Dorsolateral prefrontal cortex (tissue), 120 donors: ENCODE measurements at regions of chr4 and their contacts with region 1.

Region 1: DNA sequence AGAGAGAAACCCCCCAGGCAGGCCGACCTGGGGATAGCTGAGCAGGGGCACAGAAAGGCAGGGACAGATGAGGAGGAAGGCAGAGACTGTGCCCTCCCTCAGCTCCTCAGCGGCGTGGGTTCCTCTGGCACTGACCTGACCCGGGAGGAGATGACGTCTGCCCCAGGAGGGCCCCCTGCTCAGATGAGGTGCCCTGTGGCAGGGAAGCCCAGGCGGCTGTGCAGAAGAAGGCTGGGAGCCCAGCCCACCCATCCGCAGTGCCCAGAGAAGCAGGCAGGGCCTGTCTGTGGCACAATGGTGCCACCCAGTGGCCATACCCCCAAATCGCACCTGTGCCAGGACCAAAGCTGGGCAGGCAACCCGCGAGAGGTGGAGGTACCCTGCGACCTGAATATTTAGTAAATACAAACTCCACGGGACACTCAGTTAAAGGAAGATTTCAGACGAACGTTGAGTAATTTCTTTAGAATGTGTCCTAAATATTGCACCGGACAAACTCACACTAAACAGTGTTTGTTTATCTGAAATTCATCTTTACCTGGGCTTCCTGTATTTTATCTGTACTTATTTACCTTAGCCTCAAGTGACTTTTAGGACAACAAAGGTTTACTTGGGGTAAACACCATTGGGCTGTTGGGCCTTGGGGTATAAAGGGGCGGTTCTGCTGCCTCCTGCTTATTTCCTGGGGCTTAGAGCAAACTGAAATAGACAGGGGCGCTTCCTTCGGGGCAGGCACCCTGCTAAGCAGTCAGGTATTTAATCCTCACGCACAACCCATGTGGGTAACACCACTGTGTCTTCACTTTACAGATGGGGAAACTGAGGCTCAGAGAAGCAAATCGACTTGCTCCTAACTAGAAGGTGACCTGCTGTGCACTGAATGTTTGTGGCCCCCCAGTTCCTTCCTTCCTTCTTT is 46.5 kb upstream of the HMX1 start:
- DNase-seq: peak in 9 of 10 donors; percentile 44 to 86 (median 69)
- H3K4me3 ChIP-seq: no peak overlapping the region
- H3K27ac ChIP-seq: no peak overlapping the region
- H3K27me3 ChIP-seq: peaks cover 0 to 33% (median 10%) of the 10 kb centered on the region in 45 donors
- CTCF ChIP-seq: peak; percentile 67 to 96 (median 87)

Region 2: DNA sequence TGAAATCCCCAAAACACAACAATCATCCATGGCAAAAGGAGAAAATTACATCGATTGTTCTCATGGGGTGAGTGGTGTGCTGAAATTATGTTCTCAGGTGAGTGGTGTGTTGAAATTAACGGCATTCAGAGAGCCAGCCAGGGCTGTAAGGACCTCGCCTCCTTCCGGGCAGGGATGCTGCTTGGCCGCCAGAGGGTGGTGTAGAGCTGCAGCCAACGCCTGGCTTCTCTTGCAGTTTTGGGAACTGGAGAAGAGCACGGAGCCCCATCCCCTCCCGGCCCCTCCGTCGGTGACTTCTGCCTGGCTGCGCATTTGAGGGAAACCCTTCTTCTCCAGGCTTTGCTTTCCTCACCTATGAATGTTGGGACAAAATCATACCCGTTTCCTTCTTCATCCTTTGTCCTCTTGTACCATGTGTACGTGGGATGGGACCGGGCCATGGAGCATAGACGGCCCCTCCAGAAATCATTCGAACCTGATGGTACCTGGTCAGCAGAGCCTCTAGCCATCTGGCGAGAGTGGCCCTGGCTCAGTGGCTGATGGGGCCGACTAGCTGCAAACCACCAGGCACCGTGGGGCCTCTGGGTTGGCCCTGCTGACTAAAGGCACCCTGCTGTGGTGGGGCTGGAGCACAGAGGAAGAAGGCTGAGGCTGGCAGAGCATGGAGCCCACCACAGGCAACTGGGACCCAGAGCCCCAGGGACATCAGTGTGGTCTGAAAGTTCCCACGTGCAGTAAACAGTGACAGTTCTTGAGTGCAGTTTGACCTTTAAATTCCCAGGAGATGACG is 449.2 kb before region 1 on chr4:
- intact Hi-C with region 1: loop called in 1 of 2 experiments (anchors 10 kb)
- DNase-seq: peak in 9 of 10 donors; percentile 43 to 81 (median 66)
- H3K4me3 ChIP-seq: no peak overlapping the region
- H3K27ac ChIP-seq: no peak overlapping the region
- H3K27me3 ChIP-seq: no peaks in the 10 kb centered on the region
- CTCF ChIP-seq: peak; percentile 64 to 95 (median 87)

Region 3: GRCh38 chr4:8607603-8608481 is 310.3 kb before region 1 on chr4:
- intact Hi-C with region 1: loop called in 1 of 2 experiments (anchors 1 kb)
- DNase-seq: peak in 3 of 10 donors; percentile 9 to 62 (median 19)
- H3K4me3 ChIP-seq: peak overlapping the region in 4 of 59 donors; percentile 8 to 31 (median 8)
- H3K27ac ChIP-seq: no peak overlapping the region
- H3K27me3 ChIP-seq: peaks cover 0 to 21% (median 3%) of the 10 kb centered on the region in 45 donors
- CTCF ChIP-seq: peak; percentile 68 to 99 (median 94)